Heart left ventricle (tissue), 16 donors: ENCODE measurements at regions of chr5 and their contacts with region 1.

Region 1: GRCh38 chr5:67209142-67209771 is 12.7 kb upstream of the CD180 start:
- DNase-seq: peak in 4 of 5 donors; percentile 52 to 68 (median 56)
- ATAC-seq: peak; percentile 55 to 87 (median 84)
- H3K4me3 ChIP-seq: no peak overlapping the region
- H3K27ac ChIP-seq: peak overlapping the region in 1 of 12 donors; percentile 18
- H3K4me1 ChIP-seq: peaks cover 0 to 47% (median 3%) of the 10 kb centered on the region in 12 donors
- H3K27me3 ChIP-seq: no peaks in the 10 kb centered on the region
- CTCF ChIP-seq: peak; percentile 66 to 84 (median 82)
- POLR2A ChIP-seq: no peak

Region 2: GRCh38 chr5:66171349-66172344 is 1037.6 kb before region 1 on chr5:
- intact Hi-C with region 1: loop called in 1 of 10 experiments (anchors 10 kb)
- DNase-seq: no peak
- ATAC-seq: peak in 2 of 4 donors; percentile 55 to 56
- H3K4me3 ChIP-seq: no peak overlapping the region
- H3K27ac ChIP-seq: no peak overlapping the region
- H3K4me1 ChIP-seq: peaks cover 0 to 10% (median 0%) of the 10 kb centered on the region in 12 donors
- H3K27me3 ChIP-seq: no peaks in the 10 kb centered on the region
- CTCF ChIP-seq: peak; percentile 14 to 71 (median 55)
- POLR2A ChIP-seq: no peak

Region 3: GRCh38 chr5:66807743-66808142 is 401.5 kb before region 1 on chr5:
- intact Hi-C with region 1: loop called in 7 of 10 experiments (anchors 2 to 10 kb)
- DNase-seq: no peak
- ATAC-seq: peak; percentile 35 to 77 (median 68)
- H3K4me3 ChIP-seq: no peak overlapping the region
- H3K27ac ChIP-seq: no peak overlapping the region
- H3K4me1 ChIP-seq: peaks cover 0 to 12% (median 0%) of the 10 kb centered on the region in 12 donors
- H3K27me3 ChIP-seq: no peaks in the 10 kb centered on the region
- CTCF ChIP-seq: peak; percentile 7 to 61 (median 37)
- POLR2A ChIP-seq: no peak

Region 4: DNA sequence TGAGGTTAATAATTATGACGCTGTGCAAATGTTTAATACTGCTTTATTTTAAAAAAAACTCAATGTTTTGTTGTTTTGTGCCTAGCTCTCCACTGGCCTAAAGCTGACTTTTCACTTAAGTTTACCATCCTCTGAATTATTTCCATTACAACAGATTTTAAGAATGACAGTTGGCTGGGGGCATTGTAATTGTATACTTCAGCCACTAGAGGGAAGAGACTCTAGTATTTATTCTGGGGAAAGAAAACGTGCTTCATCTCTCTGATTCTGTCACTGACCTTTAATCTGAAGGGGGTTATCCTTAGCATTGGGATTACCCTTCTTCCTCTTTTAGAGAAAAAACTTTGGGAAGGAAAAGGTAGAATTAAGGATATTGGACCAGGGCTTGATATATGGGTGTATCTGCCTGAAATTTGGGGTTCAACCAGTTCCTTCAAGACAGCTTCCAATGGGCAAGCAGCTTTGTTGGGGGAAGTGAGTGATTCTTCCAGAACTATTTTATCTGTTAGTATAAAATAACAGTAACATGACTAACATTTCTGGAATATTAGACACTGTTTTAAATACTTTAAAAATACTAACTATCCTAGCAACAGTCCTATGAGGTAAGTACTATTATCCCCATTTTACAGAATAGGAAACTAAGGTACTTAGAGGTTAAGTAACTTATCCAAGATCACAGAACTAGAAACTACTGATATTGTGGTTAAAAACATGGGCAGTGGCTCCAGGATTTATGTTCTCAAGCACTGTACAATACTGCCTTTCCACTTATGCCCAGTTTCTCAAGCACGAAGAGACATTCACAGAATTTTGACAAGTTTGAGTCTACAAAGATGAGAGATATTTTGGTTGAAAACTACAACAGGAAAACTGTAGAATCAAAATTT is 221.1 kb before region 1 on chr5:
- intact Hi-C with region 1: loop called in 8 of 10 experiments (anchors 5 to 10 kb)
- DNase-seq: no peak
- ATAC-seq: peak in 2 of 4 donors; percentile 34 to 50
- H3K4me3 ChIP-seq: no peak overlapping the region
- H3K27ac ChIP-seq: no peak overlapping the region
- H3K4me1 ChIP-seq: peaks cover 0 to 45% (median 17%) of the 10 kb centered on the region in 12 donors
- H3K27me3 ChIP-seq: no peaks in the 10 kb centered on the region
- CTCF ChIP-seq: peak; percentile 74 to 88 (median 82)
- POLR2A ChIP-seq: no peak

Region 5: GRCh38 chr5:67165526-67166459 is 43.5 kb before region 1 on chr5:
- intact Hi-C with region 1: loop called in 8 of 10 experiments (anchors 1 to 5 kb)
- DNase-seq: peak; percentile 85 to 93 (median 87)
- ATAC-seq: peak; percentile 51 to 87 (median 86)
- H3K4me3 ChIP-seq: peak overlapping the region in 11 of 12 donors; percentile 4 to 57 (median 36)
- H3K27ac ChIP-seq: peak overlapping the region; percentile 59 to 94 (median 82)
- H3K4me1 ChIP-seq: peaks cover 0 to 35% (median 13%) of the 10 kb centered on the region in 12 donors
- H3K27me3 ChIP-seq: no peaks in the 10 kb centered on the region
- CTCF ChIP-seq: peak; percentile 54 to 88 (median 70)
- POLR2A ChIP-seq: no peak

Region 6: DNA sequence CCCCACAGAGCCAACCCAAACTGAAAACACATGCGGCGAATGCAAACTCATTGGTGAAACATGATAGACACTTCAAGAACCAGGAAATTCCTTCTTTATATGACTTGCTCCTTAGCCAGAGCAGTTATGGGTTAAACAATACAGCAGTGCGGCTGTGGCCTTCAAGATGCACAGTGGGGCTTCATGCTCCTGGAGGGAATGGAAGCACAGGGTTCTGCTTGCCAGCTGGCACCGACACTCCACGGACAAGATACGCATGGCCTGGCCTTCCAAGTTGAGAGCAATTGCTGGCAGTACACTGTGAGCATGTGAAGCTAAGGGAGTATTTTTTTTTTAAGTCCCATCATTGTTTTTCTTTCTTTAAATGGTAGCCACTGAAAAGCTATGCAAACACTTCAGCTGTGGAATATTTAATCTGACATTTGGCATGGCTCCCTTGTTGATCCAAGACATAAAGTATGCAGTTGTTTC is 439.0 kb after region 1 on chr5:
- intact Hi-C with region 1: no loop called
- DNase-seq: peak; percentile 75 to 90 (median 85)
- ATAC-seq: peak; percentile 97 to 98 (median 98)
- H3K4me3 ChIP-seq: no peak overlapping the region
- H3K27ac ChIP-seq: peak overlapping the region in 9 of 12 donors; percentile 44 to 87 (median 68)
- H3K4me1 ChIP-seq: peaks cover 0 to 38% (median 12%) of the 10 kb centered on the region in 12 donors
- H3K27me3 ChIP-seq: no peaks in the 10 kb centered on the region
- CTCF ChIP-seq: no peak
- POLR2A ChIP-seq: no peak